ENCODE measurements at regions of chr12 and their contacts with region 1.

Region 1: GRCh38 chr12:55658635-55659391 is 22.1 kb downstream of the OR10P1 start:
- DNase-seq: no peak
- H3K4me3 Mint-ChIP-seq: no peak overlapping the region
- H3K27ac Mint-ChIP-seq: no peak overlapping the region
- H3K4me1 Mint-ChIP-seq: no peaks in the 10 kb centered on the region
- H3K27me3 Mint-ChIP-seq: peaks cover 27% of the 10 kb centered on the region

Region 2: GRCh38 chr12:55582066-55582465 is 76.7 kb before region 1 on chr12:
- CTCF ChIA-PET with region 1: no interaction called
- DNase-seq: no peak
- H3K4me3 Mint-ChIP-seq: no peak overlapping the region
- H3K27ac Mint-ChIP-seq: no peak overlapping the region
- H3K4me1 Mint-ChIP-seq: no peaks in the 10 kb centered on the region
- H3K27me3 Mint-ChIP-seq: no peaks in the 10 kb centered on the region

Region 3: DNA sequence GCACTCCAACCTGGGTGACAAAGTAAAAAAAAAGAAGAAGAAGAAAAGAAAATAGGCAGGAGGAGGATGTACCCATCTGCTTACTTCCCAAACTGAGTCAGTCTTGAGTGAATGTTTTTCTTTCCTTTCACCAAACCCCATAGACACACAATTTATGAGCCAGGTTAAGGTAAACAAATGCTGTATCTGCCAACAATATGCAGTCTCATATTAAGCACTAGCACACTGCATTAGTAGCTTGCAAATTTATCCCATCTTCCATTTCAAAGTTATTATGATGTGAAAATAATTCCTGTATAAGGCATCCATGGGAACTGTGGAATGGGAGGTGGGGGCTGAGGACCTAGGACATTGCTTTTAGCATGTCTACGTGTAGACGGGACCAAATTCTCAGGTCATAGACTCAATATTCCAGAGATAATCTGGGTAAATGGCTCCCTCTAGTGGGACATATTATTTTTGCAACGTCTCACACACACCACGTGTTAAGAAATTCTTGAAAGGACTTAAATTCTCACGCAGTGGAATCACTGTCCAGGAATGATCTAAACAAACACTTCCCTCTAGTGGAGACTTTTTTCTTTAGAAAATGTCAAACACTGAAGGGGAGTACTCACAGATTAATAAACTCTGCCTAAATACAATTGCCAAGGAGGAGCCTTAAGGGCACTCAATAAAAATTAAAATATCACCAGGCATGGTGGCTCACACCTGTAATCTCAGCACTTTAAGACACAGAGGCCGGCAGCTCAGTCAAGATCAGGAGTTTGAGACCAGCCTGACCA is 39.3 kb before region 1 on chr12:
- CTCF ChIA-PET with region 1: interaction called, 11 read pairs
- DNase-seq: peak; percentile 44
- H3K4me3 Mint-ChIP-seq: no peak overlapping the region
- H3K27ac Mint-ChIP-seq: no peak overlapping the region
- H3K4me1 Mint-ChIP-seq: no peaks in the 10 kb centered on the region
- H3K27me3 Mint-ChIP-seq: peaks cover 24% of the 10 kb centered on the region

Region 4: GRCh38 chr12:55647027-55647426 is 11.8 kb before region 1 on chr12:
- CTCF ChIA-PET with region 1: interaction called, 63 read pairs
- DNase-seq: no peak
- H3K4me3 Mint-ChIP-seq: no peak overlapping the region
- H3K27ac Mint-ChIP-seq: no peak overlapping the region
- H3K4me1 Mint-ChIP-seq: peaks cover 21% of the 10 kb centered on the region
- H3K27me3 Mint-ChIP-seq: peaks cover 6% of the 10 kb centered on the region

Region 5: GRCh38 chr12:55670276-55670675 is 11.5 kb after region 1 on chr12:
- CTCF ChIA-PET with region 1: interaction called, 17 read pairs
- DNase-seq: no peak
- H3K4me3 Mint-ChIP-seq: no peak overlapping the region
- H3K27ac Mint-ChIP-seq: no peak overlapping the region
- H3K4me1 Mint-ChIP-seq: no peaks in the 10 kb centered on the region
- H3K27me3 Mint-ChIP-seq: peaks cover 4% of the 10 kb centered on the region

Region 6: GRCh38 chr12:55797068-55797467 is 138.3 kb after region 1 on chr12:
- CTCF ChIA-PET with region 1: no interaction called
- DNase-seq: peak; percentile 29
- H3K4me3 Mint-ChIP-seq: no peak overlapping the region
- H3K27ac Mint-ChIP-seq: no peak overlapping the region
- H3K4me1 Mint-ChIP-seq: peaks cover 2% of the 10 kb centered on the region
- H3K27me3 Mint-ChIP-seq: no peaks in the 10 kb centered on the region